Activated T-helper 1 cell treated with anti-CD3 and anti-CD28 coated beads, Interleukin-12 subunit alpha, Interleukin-12 subunit beta, Interleukin-2, Interleukin-4 antibody, amounts not matched to agents 30 ng/mL and 10 ng/mL and 1 ng/mL, durations not matched to agents 14 hours and 24 hours and 36 hours (primary cell): ENCODE measurements at regions of chr3 and their contacts with region 1.

Region 1: GRCh38 chr3:15815696-15816095 is 17.9 kb upstream of the ANKRD28 start:
- DNase-seq: no peak
- H3K4me3 Mint-ChIP-seq: no peak overlapping the region
- H3K27ac Mint-ChIP-seq: no peak overlapping the region
- H3K4me1 Mint-ChIP-seq: peaks cover 57% of the 10 kb centered on the region
- H3K27me3 Mint-ChIP-seq: no peaks in the 10 kb centered on the region

Region 2: DNA sequence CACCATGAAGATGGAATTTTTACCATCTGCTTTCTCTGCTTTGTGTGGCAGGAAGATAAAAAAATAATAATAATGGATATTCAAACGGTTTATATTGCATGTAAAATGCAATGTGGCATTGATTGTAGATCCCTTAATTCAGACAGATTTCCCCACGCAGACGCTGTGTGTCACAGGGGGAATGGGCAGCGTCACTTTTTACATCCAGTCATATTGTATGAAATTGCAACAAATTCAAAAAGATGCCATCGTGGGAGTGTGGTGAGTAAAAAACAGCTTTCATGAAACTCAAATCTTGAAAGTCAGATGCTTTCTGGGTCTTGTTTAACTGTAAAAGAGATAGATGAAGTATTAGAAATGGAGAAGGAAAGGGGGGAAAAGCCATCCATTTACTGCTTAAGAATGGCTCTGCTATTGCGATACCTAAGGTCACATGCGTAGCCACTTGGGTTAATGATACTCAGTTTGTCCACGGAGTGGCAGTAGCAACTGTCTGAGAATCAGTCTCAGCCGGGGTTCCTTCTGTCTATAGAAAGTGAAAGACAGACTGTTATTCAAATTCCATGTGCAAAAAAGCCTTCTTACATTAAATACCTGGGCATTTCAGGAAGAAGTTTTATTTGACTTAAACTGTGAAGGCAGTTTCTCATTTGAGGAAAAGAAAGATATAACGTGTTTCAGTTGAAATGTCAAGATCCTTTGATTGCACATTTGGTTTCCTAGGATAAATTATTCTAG is 185.7 kb before region 1 on chr3:
- intact Hi-C with region 1: loop called (anchors 1 kb)
- DNase-seq: peak; percentile 69
- H3K4me3 Mint-ChIP-seq: peak overlapping the region; percentile 48
- H3K27ac Mint-ChIP-seq: peak overlapping the region; percentile 62
- H3K4me1 Mint-ChIP-seq: peaks cover 49% of the 10 kb centered on the region
- H3K27me3 Mint-ChIP-seq: no peaks in the 10 kb centered on the region

Region 3: GRCh38 chr3:15682561-15683185 is 133.0 kb before region 1 on chr3:
- intact Hi-C with region 1: no loop called
- DNase-seq: no peak
- H3K4me3 Mint-ChIP-seq: no peak overlapping the region
- H3K27ac Mint-ChIP-seq: no peak overlapping the region
- H3K4me1 Mint-ChIP-seq: peaks cover 3% of the 10 kb centered on the region
- H3K27me3 Mint-ChIP-seq: no peaks in the 10 kb centered on the region

Region 4: GRCh38 chr3:15768421-15769255 is 47.1 kb before region 1 on chr3:
- intact Hi-C with region 1: loop called (anchors 5 kb)
- DNase-seq: no peak
- H3K4me3 Mint-ChIP-seq: peak overlapping the region; percentile 12
- H3K27ac Mint-ChIP-seq: peak overlapping the region; percentile 75
- H3K4me1 Mint-ChIP-seq: peaks cover 50% of the 10 kb centered on the region
- H3K27me3 Mint-ChIP-seq: no peaks in the 10 kb centered on the region

Region 5: DNA sequence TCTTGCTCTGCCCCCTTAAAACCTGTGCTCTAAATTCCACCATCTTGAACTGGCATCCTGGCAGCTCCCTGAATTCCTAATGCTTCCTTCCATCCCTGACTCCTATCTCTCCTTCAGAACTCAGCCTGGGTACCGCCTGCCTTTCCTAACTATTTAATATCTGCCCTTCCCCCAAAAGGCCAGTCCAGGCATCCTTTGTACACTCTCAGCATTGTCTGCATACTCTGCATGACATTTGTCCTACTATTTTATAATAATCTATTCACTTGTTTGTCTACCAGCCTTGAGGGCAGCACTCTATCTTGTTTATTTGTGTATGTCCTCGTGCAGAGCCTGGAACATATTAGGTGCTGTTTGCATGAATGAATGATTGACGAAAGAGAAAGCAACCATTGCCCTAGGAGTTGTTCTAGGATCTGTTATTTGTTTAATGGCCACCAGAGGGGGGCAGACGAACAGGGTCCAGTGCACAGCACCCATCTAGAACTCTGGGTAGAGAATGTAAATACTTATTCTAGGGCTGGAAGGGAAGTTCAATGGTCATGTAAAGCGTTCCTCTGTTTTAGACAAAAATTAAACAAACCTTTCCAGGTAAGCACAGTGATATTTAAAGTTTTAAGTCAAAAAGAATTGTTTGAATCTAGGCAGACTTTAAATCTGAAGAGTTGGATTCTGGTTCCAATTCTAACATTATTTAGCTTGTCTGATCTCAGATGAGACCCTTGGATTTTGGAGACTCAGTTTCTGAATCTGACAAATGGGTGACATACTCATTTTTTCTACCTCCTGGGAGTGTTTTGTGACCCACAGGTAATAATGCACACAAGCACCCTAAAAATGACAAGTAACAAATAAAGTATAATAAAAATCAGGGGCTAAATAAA is 233.0 kb after region 1 on chr3:
- intact Hi-C with region 1: loop called (anchors 2 kb)
- DNase-seq: peak; percentile 23
- H3K4me3 Mint-ChIP-seq: no peak overlapping the region
- H3K27ac Mint-ChIP-seq: no peak overlapping the region
- H3K4me1 Mint-ChIP-seq: peaks cover 6% of the 10 kb centered on the region
- H3K27me3 Mint-ChIP-seq: no peaks in the 10 kb centered on the region

Region 6: GRCh38 chr3:16247276-16248061 is 431.8 kb after region 1 on chr3:
- intact Hi-C with region 1: loop called (anchors 1 kb)
- DNase-seq: peak; percentile 70
- H3K4me3 Mint-ChIP-seq: no peak overlapping the region
- H3K27ac Mint-ChIP-seq: no peak overlapping the region
- H3K4me1 Mint-ChIP-seq: peaks cover 32% of the 10 kb centered on the region
- H3K27me3 Mint-ChIP-seq: peaks cover 2% of the 10 kb centered on the region